ENCODE measurements at regions of chr19 and their contacts with region 1.

Region 1: GRCh38 chr19:38374429-38375176 is at the start of gene PSMD8:
- DNase-seq: peak; percentile 100
- H3K4me3 ChIP-seq: peak within 1 kb of the TSS; percentile 84
- H3K27ac ChIP-seq: peak within 1 kb of the TSS; percentile 54
- H3K4me1 ChIP-seq: peaks cover 21% of the 10 kb centered on the region
- CTCF ChIP-seq: peak; percentile 56
- total RNA-seq, gene PSMD8: 224 and 238 TPM in 2 replicates

Region 2: DNA sequence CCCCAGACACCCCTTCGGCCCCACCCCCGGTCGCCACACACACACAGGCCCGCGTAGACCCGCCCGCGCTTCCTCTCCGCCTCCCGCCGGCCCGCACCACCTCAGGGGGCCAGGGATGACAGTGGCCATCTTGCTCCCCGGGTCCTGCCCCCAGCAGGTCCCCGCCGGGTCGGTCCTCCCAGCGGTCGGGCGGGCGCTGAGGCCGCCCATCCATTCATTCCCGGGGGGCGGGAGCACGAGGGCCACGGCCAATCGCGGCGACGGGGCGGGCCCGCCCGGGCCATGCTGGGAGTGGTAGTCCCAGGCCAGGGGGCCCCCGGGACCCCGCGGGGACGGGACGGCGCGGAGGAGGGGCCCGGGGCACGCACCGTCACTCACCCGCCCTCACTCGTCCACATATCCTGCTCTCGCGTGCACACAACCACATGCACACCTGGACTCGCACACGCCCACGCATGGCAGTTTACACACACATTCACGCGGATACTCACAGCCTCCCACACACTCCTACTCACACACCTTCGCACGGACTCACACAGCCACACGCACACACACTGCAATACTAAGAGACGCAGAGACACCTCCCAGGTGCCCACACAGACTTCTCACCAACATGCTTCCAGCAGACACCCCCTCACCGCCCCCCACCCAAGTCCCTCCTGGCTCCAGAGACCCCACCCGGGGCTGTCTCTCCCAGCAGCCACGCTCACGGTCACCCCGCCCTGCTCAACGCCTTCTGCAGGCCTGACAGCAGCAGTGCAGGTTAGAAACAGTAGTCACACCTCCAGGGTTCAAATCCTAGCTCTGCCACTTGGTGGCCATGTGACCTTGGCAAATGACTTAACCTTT is 150.4 kb before region 1 on chr19 and contains the start of gene DPF1:
- CTCF ChIA-PET with region 1: no interaction called
- POLR2A ChIA-PET with region 1: no interaction called
- intact Hi-C with region 1: no loop called
- DNase-seq: peak; percentile 88
- H3K4me3 ChIP-seq: peak within 1 kb of the TSS; percentile 76
- H3K27ac ChIP-seq: no peak within 1 kb of the TSS
- H3K4me1 ChIP-seq: peaks cover 26% of the 10 kb centered on the region
- CTCF ChIP-seq: peak; percentile 76
- total RNA-seq, gene DPF1: 6.5 and 7.6 TPM in 2 replicates

Region 3: DNA sequence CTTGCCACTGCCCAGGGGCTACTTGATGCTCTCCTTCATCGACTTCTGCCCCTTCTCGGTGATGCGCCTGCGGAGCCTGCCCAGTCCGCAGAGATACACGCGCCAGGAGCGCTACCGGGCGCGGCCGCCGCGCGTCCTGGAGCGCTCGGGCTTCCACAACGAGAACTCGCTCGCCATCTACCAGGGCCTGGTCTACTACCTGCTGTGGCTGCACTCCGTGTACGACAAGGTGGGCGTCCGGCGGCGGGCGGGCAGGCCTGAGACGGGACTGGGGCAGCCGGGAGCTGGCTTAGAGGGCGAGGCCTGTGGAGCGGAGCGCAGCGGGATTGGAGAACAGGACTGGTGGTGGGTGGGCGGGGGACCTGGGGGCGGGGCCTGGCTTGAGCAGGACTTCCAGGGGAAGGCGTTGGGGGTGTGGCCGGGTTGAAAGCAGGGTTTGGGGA is 12.9 kb before region 1 on chr19:
- CTCF ChIA-PET with region 1: interaction called, 11 read pairs
- POLR2A ChIA-PET with region 1: interaction called, 10 read pairs
- intact Hi-C with region 1: no loop called
- DNase-seq: peak; percentile 82
- H3K4me3 ChIP-seq: peak overlapping the region; percentile 71
- H3K27ac ChIP-seq: no peak overlapping the region
- H3K4me1 ChIP-seq: peaks cover 11% of the 10 kb centered on the region
- CTCF ChIP-seq: 0 out of 2 replicates have a peak, but pooled peaks have one; percentile 14